AG04449 (cell line): ENCODE measurements at regions of chr5 and their contacts with region 1.

Region 1: GRCh38 chr5:54905943-54906537 is 79.4 kb downstream of the ESM1 start:
- DNase-seq: no peak
- H3K4me3 ChIP-seq: no peak overlapping the region
- CTCF ChIP-seq: peak; percentile 54

Region 2: DNA sequence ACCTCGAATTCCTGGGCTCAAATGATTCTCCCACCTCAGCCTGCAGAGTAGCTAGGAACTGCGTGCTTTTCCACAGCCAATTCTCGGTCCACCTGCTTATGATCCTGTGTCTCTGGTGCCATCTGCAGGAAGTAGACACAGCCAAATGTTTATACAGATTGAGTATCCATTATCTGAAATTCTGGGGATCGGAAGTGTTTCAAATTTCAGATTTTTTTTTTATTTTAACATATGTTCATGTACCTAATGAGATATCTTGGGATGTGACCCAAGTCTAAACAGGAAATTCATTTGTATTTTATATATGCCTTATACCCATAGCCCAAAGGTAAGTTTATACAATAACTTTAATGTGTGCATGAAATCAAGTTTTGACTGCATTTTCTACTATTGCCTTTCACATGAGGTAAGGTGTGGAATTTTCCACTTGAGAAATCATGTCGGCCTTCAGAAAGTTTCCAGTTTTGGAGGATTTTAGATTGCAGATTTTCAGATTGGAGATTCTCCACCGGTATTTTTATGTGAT is 10.2 kb before region 1 on chr5:
- CTCF ChIA-PET with region 1: interaction called, 144 read pairs
- POLR2A ChIA-PET with region 1: no interaction called
- DNase-seq: no peak
- H3K4me3 ChIP-seq: no peak overlapping the region
- CTCF ChIP-seq: peak; percentile 49

Region 3: GRCh38 chr5:54927097-54927746 is 21.2 kb after region 1 on chr5:
- CTCF ChIA-PET with region 1: interaction called, 10 read pairs
- POLR2A ChIA-PET with region 1: no interaction called
- DNase-seq: no peak
- H3K4me3 ChIP-seq: no peak overlapping the region
- CTCF ChIP-seq: no peak

Region 4: DNA sequence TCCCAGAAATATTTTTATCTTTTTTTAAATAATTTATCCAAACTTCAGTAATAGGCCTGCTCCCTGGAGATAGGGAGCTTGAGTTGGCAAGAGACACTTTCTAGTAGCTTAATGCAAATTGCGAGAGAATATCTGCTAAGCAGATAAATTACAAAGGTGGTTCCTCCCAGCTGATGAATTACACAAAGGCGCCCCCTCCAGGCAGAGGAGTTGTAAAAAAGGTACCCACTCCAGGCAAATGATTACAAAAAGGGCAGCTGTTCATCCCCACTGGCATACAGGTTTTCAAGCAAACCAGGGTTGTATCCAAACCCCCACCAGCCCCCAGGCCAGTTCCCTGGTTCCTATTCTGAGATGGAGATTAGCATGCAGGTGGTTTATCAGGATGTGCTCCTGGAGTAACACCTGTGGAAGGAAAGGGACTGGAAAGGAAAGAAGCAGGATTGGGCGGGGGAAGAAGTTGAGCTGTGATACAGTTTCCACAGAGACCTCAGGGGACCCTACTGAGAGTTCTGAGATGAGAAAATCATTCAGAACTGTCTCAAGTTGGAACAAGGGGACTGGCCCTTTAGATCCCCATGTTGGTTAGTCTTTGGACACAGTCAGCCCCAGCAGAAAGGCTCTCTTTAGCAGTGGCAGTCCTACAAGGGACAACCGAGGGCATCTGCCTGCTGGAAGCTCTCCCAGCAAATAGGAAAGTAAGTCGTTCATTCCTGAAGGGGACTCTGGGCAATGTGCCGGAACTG is 53.8 kb after region 1 on chr5:
- CTCF ChIA-PET with region 1: interaction called, 16 read pairs
- POLR2A ChIA-PET with region 1: interaction called, 3 read pairs
- DNase-seq: no peak
- H3K4me3 ChIP-seq: no peak overlapping the region
- CTCF ChIP-seq: no peak

Region 5: GRCh38 chr5:55146543-55147151 is 240.6 kb after region 1 on chr5:
- CTCF ChIA-PET with region 1: interaction called, 389 read pairs
- POLR2A ChIA-PET with region 1: no interaction called
- DNase-seq: peak; percentile 17
- H3K4me3 ChIP-seq: no peak overlapping the region
- CTCF ChIP-seq: peak; percentile 95

Region 6: DNA sequence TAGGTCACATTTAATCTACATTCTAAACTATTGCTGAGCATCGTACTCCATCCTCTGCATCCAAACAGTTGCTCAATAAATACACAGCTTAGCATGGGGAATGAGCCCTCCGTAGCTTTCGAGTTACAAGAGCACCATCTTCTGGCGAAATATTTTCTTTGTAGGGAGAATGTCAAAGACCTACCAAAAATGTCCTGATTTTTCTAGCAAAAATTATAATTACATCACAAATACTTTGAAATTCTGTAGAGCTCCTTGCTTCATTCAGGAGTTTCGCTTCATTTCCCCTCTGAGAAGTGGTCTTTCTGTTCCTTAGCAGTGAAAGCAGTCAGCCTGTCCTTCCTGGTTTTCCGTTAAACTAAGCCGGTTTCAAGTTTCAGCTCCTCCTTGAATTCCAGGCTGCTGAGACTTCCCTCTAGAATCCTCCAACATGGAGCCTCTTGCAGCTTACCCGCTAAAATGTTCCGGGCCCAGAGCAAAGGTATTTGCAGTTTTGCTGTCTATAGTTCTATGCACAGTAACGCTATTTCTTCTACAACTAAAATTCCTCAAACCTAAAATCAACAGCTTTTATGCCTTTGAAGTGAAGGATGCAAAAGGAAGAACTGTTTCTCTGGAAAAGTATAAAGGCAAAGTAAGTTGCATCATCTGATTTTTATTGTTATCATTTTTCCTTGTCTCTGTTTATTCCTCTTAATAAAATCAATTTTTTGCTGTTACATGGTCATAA is 253.9 kb after region 1 on chr5 and contains the start of gene GPX8:
- CTCF ChIA-PET with region 1: interaction called, 389 read pairs
- POLR2A ChIA-PET with region 1: interaction called, 11 read pairs
- DNase-seq: peak; percentile 59
- H3K4me3 ChIP-seq: peak within 1 kb of the TSS; percentile 69
- CTCF ChIP-seq: peak; percentile 26